Sigmoid colon (tissue), 7 donors: ENCODE measurements at regions of chr13 and their contacts with region 1.

Region 1: GRCh38 chr13:44969551-44970484 is 19.5 kb downstream of the NUFIP1 start:
- DNase-seq: no peak
- H3K4me3 ChIP-seq: no peak overlapping the region
- H3K27ac ChIP-seq: peak overlapping the region; percentile 62 to 77 (median 70)
- H3K4me1 ChIP-seq: peaks cover 0 to 32% (median 23%) of the 10 kb centered on the region in 4 donors
- H3K27me3 ChIP-seq: no peaks in the 10 kb centered on the region
- CTCF ChIP-seq: peak; percentile 62 to 83 (median 78)
- EP300 ChIP-seq: no peak
- POLR2A ChIP-seq: no peak

Region 2: DNA sequence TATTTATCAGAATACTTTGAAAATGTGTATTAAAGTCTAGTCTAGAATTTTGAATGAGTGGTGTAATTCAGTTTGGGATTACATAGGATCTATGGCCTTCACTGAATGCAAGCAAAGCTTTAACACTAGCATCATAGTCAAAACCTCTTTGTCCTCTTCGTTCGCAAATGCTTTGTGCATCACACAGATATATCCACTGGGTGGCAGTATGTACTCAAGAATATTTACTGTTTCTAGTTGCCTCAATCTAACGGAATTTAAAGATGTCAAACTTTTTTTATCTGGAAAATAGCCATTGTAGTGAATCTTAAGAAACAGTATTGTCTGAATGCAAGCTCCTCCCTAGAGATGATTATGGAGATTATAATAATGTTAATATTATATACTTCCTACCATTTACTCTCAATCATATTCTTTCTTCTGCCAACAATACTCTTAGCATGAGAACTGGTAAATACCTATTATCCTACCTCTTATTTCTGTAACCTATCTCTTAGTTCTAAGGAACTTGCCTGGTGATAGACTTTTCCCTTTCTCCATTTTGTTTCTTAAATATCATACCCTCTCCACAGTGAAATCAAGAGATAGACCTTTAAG is 1064.3 kb before region 1 on chr13:
- intact Hi-C with region 1: loop called (anchors 5 kb)
- DNase-seq: no peak
- H3K4me3 ChIP-seq: no peak overlapping the region
- H3K27ac ChIP-seq: no peak overlapping the region
- H3K4me1 ChIP-seq: peaks cover 0 to 12% (median 5%) of the 10 kb centered on the region in 4 donors
- H3K27me3 ChIP-seq: no peaks in the 10 kb centered on the region
- CTCF ChIP-seq: peak; percentile 66 to 80 (median 76)
- EP300 ChIP-seq: no peak
- POLR2A ChIP-seq: no peak

Region 3: DNA sequence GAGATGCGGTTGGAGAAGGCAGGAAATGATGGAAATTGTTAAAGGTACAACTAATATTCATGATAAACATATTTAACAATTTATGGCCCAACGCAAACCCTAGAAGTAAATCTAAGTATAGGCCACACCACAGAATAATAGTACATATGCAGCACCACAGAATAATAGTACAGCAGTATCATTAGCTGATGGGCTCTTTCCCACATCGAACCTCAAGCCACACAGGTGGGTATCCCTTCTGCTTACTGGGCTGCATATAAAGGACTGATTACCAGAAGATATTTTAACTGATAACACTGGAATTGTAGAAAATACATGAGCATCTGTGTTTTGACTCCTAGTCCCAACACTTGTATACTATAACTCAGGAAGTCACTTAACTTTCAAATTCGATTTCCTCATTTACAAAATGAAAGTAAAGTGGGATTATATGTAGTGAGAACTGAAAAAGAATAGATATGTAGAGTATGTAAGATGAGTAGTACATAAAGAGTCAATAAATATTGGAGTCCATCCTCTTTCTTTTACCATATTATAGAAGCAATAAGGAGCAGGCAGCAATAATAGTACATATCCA is 485.2 kb before region 1 on chr13:
- intact Hi-C with region 1: loop called (anchors 1 kb)
- DNase-seq: no peak
- H3K4me3 ChIP-seq: no peak overlapping the region
- H3K27ac ChIP-seq: no peak overlapping the region
- H3K4me1 ChIP-seq: no peaks in the 10 kb centered on the region
- H3K27me3 ChIP-seq: no peaks in the 10 kb centered on the region
- CTCF ChIP-seq: no peak
- EP300 ChIP-seq: no peak
- POLR2A ChIP-seq: no peak

Region 4: DNA sequence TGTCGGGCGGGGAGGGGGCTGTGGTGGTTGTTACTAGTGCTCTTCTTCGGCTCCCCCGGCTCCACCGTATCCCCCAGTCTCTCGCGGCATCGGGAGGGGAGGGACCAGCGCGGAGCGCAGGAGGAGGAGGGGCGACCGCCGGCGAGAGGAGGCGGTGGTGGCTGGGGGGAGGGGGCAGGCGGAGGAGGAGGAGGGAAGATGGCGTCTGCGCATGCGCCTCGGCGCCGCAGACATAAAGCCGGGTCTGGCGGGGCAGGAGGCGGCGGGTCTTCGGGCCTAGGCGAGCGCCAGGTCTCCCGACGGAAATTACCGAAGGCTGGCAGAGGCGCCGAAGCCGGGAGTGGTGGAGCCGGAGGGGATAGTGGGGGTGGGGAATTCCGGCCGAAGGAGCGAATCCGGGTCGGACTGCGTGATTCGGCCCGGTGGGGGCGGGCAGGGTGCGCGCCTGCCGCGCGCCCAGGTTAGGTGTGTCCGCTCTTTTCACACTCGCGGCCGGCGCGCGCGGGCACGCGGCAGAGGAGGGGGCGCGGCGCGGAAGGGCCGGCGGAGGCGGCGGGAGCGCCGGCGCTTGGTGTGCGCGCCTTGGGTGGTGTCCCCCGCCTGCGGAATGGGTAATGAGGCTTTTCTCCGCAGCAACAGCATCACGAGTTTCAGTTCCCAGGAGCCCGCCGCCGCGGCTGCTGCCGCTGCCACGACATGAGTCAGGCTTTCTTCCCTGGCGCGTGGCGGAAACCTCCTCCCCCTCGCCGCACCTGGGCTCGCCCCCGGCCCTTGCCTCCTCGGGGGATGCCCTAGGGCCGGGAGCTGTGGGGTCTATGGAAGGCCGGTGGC is 392.4 kb before region 1 on chr13:
- intact Hi-C with region 1: loop called (anchors 5 kb)
- DNase-seq: peak; percentile 98
- H3K4me3 ChIP-seq: peak overlapping the region; percentile 81 to 95 (median 89)
- H3K27ac ChIP-seq: peak overlapping the region; percentile 97 to 99 (median 99)
- H3K4me1 ChIP-seq: peaks cover 0 to 40% (median 28%) of the 10 kb centered on the region in 4 donors
- H3K27me3 ChIP-seq: no peaks in the 10 kb centered on the region
- CTCF ChIP-seq: no peak
- EP300 ChIP-seq: no peak
- POLR2A ChIP-seq: peak; percentile 40 to 55

Region 5: DNA sequence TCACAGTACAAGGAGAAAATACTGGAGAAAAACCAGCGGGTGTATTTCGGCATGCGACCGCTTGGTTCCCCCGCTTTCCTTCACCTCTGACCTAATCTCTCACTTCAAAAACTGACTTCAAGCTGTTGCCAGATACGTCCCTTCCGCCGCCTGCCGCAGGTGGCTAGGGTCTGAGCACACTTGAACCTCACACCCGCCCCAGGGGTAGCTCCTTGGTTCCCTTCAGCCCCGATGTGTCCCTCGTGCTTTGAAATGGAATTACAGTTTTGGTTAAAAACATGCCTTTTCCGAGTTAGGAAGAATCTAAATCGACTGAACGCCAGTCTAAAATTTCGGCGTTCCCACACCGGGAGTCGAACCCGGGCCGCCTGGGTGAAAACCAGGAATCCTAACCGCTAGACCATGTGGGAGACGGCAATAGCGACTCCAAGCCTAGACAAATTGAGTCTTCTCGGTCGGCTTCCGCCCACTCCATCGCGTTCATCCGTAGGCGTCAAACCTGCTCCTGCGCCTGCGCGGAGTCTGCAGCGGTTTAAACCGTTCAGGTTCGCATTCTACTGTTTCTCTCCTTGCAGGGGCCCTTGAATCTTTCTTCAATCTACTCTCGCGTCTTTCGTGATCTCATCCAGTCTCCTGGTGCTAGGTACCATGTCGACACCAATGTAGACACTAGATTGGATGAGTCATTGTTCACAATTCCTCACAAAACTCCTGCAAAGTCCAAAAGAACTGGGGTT is 52.1 kb before region 1 on chr13:
- intact Hi-C with region 1: loop called (anchors 5 kb)
- DNase-seq: peak; percentile 98
- H3K4me3 ChIP-seq: peak overlapping the region; percentile 30 to 52 (median 49)
- H3K27ac ChIP-seq: peak overlapping the region; percentile 89 to 97 (median 93)
- H3K4me1 ChIP-seq: peaks cover 0 to 44% (median 31%) of the 10 kb centered on the region in 4 donors
- H3K27me3 ChIP-seq: no peaks in the 10 kb centered on the region
- CTCF ChIP-seq: peak; percentile 37 to 69 (median 64)
- EP300 ChIP-seq: no peak
- POLR2A ChIP-seq: peak; percentile 55 to 66

Region 6: GRCh38 chr13:45015300-45015699 is 45.5 kb after region 1 on chr13:
- intact Hi-C with region 1: no loop called
- DNase-seq: no peak
- H3K4me3 ChIP-seq: no peak overlapping the region
- H3K27ac ChIP-seq: no peak overlapping the region
- H3K4me1 ChIP-seq: no peaks in the 10 kb centered on the region
- H3K27me3 ChIP-seq: no peaks in the 10 kb centered on the region
- CTCF ChIP-seq: no peak
- EP300 ChIP-seq: no peak
- POLR2A ChIP-seq: no peak

Region 7: GRCh38 chr13:45310341-45311125 is 340.7 kb after region 1 on chr13:
- intact Hi-C with region 1: loop called (anchors 5 kb)
- DNase-seq: no peak
- H3K4me3 ChIP-seq: peak overlapping the region in 3 of 4 donors; percentile 39 to 55 (median 54)
- H3K27ac ChIP-seq: no peak overlapping the region
- H3K4me1 ChIP-seq: peaks cover 0 to 25% (median 22%) of the 10 kb centered on the region in 4 donors
- H3K27me3 ChIP-seq: no peaks in the 10 kb centered on the region
- CTCF ChIP-seq: no peak
- EP300 ChIP-seq: no peak
- POLR2A ChIP-seq: no peak